SK-N-SH (cell line): ENCODE measurements at regions of chr2 and their contacts with region 1.

Region 1: GRCh38 chr2:211093743-211094303 is 537.4 kb downstream of the CPS1 start:
- DNase-seq: peak; percentile 3
- H3K4me3 ChIP-seq: no peak overlapping the region
- H3K27ac ChIP-seq: no peak overlapping the region
- H3K4me1 ChIP-seq: no peaks in the 10 kb centered on the region
- H3K27me3 ChIP-seq: no peaks in the 10 kb centered on the region
- CTCF ChIP-seq: peak; percentile 51
- EP300 ChIP-seq: no peak
- RAD21 ChIP-seq: peak; percentile 54

Region 2: DNA sequence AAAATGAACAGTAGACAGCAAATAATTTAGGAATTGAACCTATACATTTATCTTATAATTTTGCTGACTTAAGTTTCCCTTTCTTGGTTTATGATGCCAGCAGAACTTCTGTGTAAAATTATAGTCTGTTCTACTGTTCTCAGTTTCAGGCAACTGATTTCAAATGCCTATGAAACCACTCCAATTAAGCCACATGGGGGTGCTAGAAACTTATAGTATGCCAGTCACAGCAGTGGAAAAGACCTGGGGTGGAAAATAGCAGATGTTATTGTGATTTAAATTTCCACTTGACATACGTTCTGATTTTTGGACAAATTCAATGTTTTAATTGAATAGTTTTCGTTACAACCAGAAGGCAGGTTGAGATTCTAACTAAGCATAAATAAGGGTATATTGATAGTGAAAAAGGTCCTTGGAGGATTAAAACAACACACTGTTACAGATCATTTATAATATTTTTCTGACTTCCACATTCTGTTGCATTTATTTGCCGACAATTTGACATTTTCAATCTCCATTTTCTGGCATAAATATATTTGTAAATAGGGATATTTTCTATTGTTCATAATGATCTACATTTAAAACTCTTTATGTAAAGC is 476.0 kb before region 1 on chr2:
- CTCF ChIA-PET with region 1: interaction called, 10 read pairs
- POLR2A ChIA-PET with region 1: no interaction called
- DNase-seq: peak; percentile 55
- H3K4me3 ChIP-seq: peak overlapping the region in 1 of 2 experiments; percentile 36; a peak in 1 of 4 replicates
- H3K27ac ChIP-seq: no peak overlapping the region
- H3K4me1 ChIP-seq: no peaks in the 10 kb centered on the region
- H3K27me3 ChIP-seq: no peaks in the 10 kb centered on the region
- CTCF ChIP-seq: peak; percentile 84
- EP300 ChIP-seq: no peak
- RAD21 ChIP-seq: peak; percentile 92

Region 3: DNA sequence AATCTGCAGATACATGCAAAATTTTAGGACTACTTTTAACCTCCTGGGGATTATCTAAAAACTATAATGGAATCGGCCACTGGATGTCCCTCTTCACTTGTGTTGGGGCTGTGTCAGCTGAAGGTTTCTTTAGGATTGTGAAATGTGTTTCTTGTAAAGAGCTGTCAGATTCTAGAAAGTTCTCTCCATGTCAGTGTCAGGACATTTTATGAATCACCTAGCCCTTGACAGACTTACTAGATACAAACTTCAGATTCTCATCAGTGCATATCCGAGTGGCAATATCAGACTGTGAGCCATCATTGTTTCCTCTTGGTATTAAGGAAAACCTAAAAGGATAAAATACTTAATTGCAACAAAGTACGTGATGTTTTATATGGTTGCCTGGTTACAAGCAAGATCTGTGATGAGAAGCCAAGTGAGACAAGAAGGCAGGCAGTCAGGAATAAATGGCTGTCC is 430.2 kb before region 1 on chr2:
- CTCF ChIA-PET with region 1: interaction called, 10 read pairs
- POLR2A ChIA-PET with region 1: no interaction called
- DNase-seq: peak; percentile 40
- H3K4me3 ChIP-seq: no peak overlapping the region
- H3K27ac ChIP-seq: no peak overlapping the region
- H3K4me1 ChIP-seq: no peaks in the 10 kb centered on the region
- H3K27me3 ChIP-seq: no peaks in the 10 kb centered on the region
- CTCF ChIP-seq: peak; percentile 38
- EP300 ChIP-seq: no peak; a peak in 1 of 4 replicates
- RAD21 ChIP-seq: peak; percentile 84

Region 4: GRCh38 chr2:211114826-211115455 is 21.1 kb after region 1 on chr2:
- CTCF ChIA-PET with region 1: interaction called, 10 read pairs
- POLR2A ChIA-PET with region 1: no interaction called
- DNase-seq: no peak
- H3K4me3 ChIP-seq: no peak overlapping the region
- H3K27ac ChIP-seq: no peak overlapping the region
- H3K4me1 ChIP-seq: no peaks in the 10 kb centered on the region
- H3K27me3 ChIP-seq: no peaks in the 10 kb centered on the region
- CTCF ChIP-seq: no peak
- EP300 ChIP-seq: no peak
- RAD21 ChIP-seq: no peak

Region 5: GRCh38 chr2:211408516-211408915 is 314.7 kb after region 1 on chr2:
- CTCF ChIA-PET with region 1: no interaction called
- POLR2A ChIA-PET with region 1: no interaction called
- DNase-seq: no peak
- H3K4me3 ChIP-seq: no peak overlapping the region
- H3K27ac ChIP-seq: no peak overlapping the region
- H3K4me1 ChIP-seq: no peaks in the 10 kb centered on the region
- H3K27me3 ChIP-seq: no peaks in the 10 kb centered on the region
- CTCF ChIP-seq: no peak
- EP300 ChIP-seq: no peak
- RAD21 ChIP-seq: no peak

Region 6: GRCh38 chr2:211487733-211488132 is 393.9 kb after region 1 on chr2:
- CTCF ChIA-PET with region 1: no interaction called
- POLR2A ChIA-PET with region 1: no interaction called
- DNase-seq: no peak
- H3K4me3 ChIP-seq: no peak overlapping the region
- H3K27ac ChIP-seq: no peak overlapping the region
- H3K4me1 ChIP-seq: no peaks in the 10 kb centered on the region
- H3K27me3 ChIP-seq: no peaks in the 10 kb centered on the region
- CTCF ChIP-seq: no peak
- EP300 ChIP-seq: no peak
- RAD21 ChIP-seq: no peak